Heart left ventricle (tissue), 16 donors: ENCODE measurements at regions of chr9 and their contacts with region 1.

Region 1: GRCh38 chr9:68476847-68477246 is 63.8 kb downstream of the TMEM252 start:
- DNase-seq: peak in 2 of 5 donors; percentile 28 to 52
- ATAC-seq: peak in 3 of 4 donors; percentile 62 to 67 (median 66)
- H3K4me3 ChIP-seq: no peak overlapping the region
- H3K27ac ChIP-seq: peak overlapping the region in 10 of 12 donors; percentile 8 to 70 (median 33)
- H3K4me1 ChIP-seq: peaks cover 0 to 45% (median 26%) of the 10 kb centered on the region in 12 donors
- H3K27me3 ChIP-seq: no peaks in the 10 kb centered on the region
- CTCF ChIP-seq: no peak
- POLR2A ChIP-seq: no peak

Region 2: DNA sequence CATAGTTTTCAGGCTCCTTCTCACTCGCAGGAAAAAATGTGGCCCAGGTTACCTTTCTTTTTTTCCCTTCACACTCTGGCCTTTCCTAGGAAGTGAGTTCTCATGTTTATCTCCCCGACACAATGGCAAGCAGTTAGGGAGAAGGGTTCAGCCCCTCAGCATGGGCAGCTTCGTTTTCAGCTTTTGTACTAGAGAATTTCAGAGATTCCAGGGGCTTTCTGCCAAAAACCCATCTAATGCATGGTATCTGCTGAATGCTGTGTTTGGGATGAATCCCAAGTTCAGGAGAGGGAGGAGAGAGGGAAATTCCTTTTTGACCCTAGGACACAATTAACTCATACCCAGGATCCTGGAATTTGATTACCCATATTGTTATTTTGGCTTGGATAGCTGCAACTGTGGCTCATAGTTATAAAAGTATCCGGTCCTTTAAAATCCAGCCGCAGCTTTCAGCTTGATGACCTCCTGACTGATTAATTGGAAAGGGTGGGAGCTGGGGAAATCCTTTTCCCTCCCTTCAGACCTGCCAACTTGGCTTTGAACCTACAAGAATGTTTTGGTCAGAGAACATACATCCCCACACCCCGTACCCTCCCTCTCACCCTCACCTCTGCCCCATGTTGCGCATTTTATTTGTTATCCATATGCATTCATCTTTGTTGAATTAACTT is 14.6 kb before region 1 on chr9:
- intact Hi-C with region 1: loop called in 1 of 10 experiments (anchors 2 kb)
- DNase-seq: peak in 1 of 5 donors; percentile 30
- ATAC-seq: peak; percentile 49 to 76 (median 64)
- H3K4me3 ChIP-seq: no peak overlapping the region
- H3K27ac ChIP-seq: peak overlapping the region in 11 of 12 donors; percentile 21 to 72 (median 38)
- H3K4me1 ChIP-seq: peaks cover 0 to 43% (median 23%) of the 10 kb centered on the region in 12 donors
- H3K27me3 ChIP-seq: no peaks in the 10 kb centered on the region
- CTCF ChIP-seq: no peak
- POLR2A ChIP-seq: no peak